ENCODE measurements at regions of chr17 and their contacts with region 1.

Region 1: DNA sequence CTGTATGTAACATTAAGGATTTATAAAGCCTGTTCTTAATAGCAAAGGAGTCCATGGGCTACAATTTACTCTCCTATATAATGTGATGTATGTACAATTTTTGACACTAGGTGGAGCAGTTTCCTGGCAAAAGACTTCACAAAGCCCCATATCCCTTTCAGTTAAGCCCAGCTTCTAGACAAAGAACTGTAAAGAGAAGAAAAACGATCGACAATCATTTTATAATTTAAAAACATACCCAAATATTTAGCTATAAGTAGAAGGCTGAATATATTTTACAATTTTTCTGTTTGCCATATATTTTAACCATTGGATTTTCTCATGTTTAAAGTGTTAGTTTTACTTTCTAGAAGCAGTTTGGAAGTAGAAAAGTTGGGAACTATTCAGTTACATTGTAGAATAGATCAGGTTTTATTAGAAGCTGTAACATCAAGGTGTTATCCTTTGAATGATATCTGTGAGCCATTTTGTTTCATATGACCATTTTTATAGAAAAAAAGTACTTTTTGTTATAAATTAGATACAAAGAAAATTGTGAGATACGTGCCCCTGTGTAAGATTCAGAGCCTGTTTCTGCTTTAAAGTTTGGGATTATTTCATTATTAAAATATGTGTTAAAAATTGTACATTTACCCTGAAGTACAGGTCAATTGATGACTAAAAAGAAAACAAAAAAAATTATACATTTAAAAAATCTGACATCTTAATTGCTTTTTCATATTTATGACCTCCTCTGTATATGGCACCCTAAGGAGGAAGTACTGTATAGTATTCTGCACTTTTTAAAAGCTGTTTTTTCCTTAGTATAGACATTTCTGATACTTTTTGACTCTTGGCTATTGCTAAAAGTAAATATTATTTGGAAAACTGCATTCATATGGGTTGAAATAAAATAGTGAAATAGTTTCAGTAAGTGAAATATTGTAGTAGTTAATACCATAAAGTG is 46.3 kb downstream of the VMP1 start:
- DNase-seq: peak; percentile 57 to 88 (median 68)
- ATAC-seq: peak; percentile 95
- H3K4me3 ChIP-seq: no peak overlapping the region
- H3K27ac ChIP-seq: peak overlapping the region; percentile 63; the same call in 2 of the 3 replicates
- H3K4me1 ChIP-seq: peaks cover 0 to 5% of the 10 kb centered on the region in 2 experiments; a peak in 2 of 5 replicates
- H3K27me3 ChIP-seq: no peaks in the 10 kb centered on the region
- CTCF ChIP-seq: peak; percentile 57 to 89 (median 65); a peak in 5 of 6 replicates
- EP300 ChIP-seq: 0 out of 2 replicates have a peak, but pooled peaks have one; percentile 23
- POLR2A ChIP-seq: no peak
- RAD21 ChIP-seq: peak; percentile 93 to 97

Region 2: DNA sequence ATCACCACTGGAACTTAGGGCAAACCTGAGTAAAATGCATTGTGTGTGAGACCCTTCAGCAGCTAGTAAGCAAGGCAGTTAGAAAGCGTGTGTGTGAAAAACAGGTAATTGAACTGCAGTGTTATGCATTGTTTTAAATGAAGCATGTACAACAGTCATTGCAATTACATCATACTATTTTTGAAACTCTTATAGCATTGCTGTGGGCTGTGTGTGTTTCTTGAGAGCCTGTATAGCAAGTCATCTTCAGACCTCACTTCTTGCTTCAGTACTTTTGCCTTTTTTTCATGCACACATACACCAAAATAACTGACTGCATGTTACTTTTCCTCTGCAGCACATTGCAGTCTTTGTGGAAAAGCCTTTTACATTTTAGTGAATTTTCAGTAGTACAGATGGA is 65.8 kb before region 1 on chr17:
- CTCF ChIA-PET with region 1: no interaction called
- POLR2A ChIA-PET with region 1: no interaction called
- in situ Hi-C with region 1: no loop called
- intact Hi-C with region 1: no loop called
- DNase-seq: no peak
- ATAC-seq: no peak
- H3K4me3 ChIP-seq: no peak overlapping the region
- H3K27ac ChIP-seq: peak overlapping the region; percentile 29; the same call in 1 of the 3 replicates
- H3K4me1 ChIP-seq: peaks cover 7 to 28% of the 10 kb centered on the region in 2 experiments; a peak in 4 of 5 replicates
- H3K27me3 ChIP-seq: no peaks in the 10 kb centered on the region
- CTCF ChIP-seq: no peak
- EP300 ChIP-seq: no peak
- POLR2A ChIP-seq: 0 out of 2 replicates have a peak, but pooled peaks have one; percentile 26
- RAD21 ChIP-seq: no peak

Region 3: GRCh38 chr17:59786536-59787319 is 32.9 kb after region 1 on chr17:
- CTCF ChIA-PET with region 1: no interaction called
- POLR2A ChIA-PET with region 1: interaction called, 5 read pairs
- in situ Hi-C with region 1: no loop called
- intact Hi-C with region 1: loop called (anchors 2 kb)
- DNase-seq: peak; percentile 70 to 96 (median 78)
- ATAC-seq: peak; percentile 89
- H3K4me3 ChIP-seq: peak overlapping the region; percentile 20; the same call in 1 of the 2 replicates
- H3K27ac ChIP-seq: peak overlapping the region; percentile 92
- H3K4me1 ChIP-seq: peaks cover 35 to 45% of the 10 kb centered on the region in 2 experiments
- H3K27me3 ChIP-seq: no peaks in the 10 kb centered on the region
- CTCF ChIP-seq: peak in 1 of 3 experiments; percentile 29; a peak in 2 of 6 replicates
- EP300 ChIP-seq: peak; percentile 89
- POLR2A ChIP-seq: peak; percentile 72
- RAD21 ChIP-seq: peak; percentile 12 to 43; a peak in 2 of 4 replicates

Region 4: GRCh38 chr17:59837308-59838051 is 83.7 kb after region 1 on chr17:
- CTCF ChIA-PET with region 1: interaction called, 18 read pairs
- POLR2A ChIA-PET with region 1: interaction called, 87 read pairs
- in situ Hi-C with region 1: no loop called
- intact Hi-C with region 1: no loop called
- DNase-seq: peak; percentile 72 to 97 (median 79)
- ATAC-seq: peak; percentile 80
- H3K4me3 ChIP-seq: peak overlapping the region; percentile 96
- H3K27ac ChIP-seq: peak overlapping the region; percentile 99
- H3K4me1 ChIP-seq: peaks cover 2 to 29% of the 10 kb centered on the region in 2 experiments; a peak in 3 of 5 replicates
- H3K27me3 ChIP-seq: no peaks in the 10 kb centered on the region
- CTCF ChIP-seq: 0 out of 6 replicates have a peak, but pooled peaks of 1 of the 3 experiments have one; percentile 0
- EP300 ChIP-seq: peak; percentile 92
- POLR2A ChIP-seq: peak; percentile 99
- RAD21 ChIP-seq: no peak

Region 5: DNA sequence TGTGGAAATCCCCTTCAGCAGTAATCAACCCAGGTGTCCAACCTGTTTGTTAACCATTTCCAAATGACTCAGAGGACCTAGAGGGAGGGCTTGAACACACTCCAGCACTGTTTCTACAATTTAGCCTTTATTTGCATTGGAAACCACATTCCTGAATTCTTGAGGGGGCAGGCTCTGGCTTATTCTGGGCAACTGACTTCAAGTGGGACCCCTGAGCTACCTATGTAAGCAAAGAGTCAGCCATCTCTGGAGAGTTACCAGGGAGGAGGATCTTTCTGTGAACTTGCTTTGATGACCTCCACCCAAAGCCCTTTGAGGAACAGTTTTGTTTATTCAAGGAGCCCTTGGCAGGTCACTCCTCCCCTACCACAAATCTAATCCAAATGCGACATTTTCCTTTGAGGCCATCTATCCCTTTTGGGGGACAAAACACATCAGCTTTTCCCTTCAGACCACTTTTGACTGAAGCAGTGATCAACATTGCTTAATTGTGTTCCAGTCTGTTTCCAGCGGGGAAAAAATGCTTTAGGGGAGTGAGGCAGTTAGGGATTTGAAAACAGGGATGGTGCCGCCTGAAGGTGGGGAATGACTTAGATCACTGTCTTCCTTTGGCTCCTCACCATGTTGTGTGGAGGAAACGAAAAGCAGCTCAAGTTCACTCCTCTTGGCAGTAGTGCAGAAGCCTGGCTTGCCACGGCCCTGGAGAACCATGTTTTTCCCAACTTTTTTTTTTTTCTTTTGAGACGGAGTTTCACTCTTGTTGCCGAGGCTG is 92.8 kb after region 1 on chr17:
- CTCF ChIA-PET with region 1: interaction called, 3 read pairs
- POLR2A ChIA-PET with region 1: interaction called, 87 read pairs
- in situ Hi-C with region 1: loop called (anchors 5 kb)
- intact Hi-C with region 1: loop called (anchors 1 kb)
- DNase-seq: peak in 1 of 4 experiments; percentile 21
- ATAC-seq: no peak
- H3K4me3 ChIP-seq: no peak overlapping the region
- H3K27ac ChIP-seq: peak overlapping the region; percentile 20; the same call in 1 of the 3 replicates
- H3K4me1 ChIP-seq: peaks cover 20 to 42% of the 10 kb centered on the region in 2 experiments
- H3K27me3 ChIP-seq: no peaks in the 10 kb centered on the region
- CTCF ChIP-seq: no peak
- EP300 ChIP-seq: no peak
- POLR2A ChIP-seq: no peak; the same call in 1 of the 2 replicates
- RAD21 ChIP-seq: no peak

Region 6: GRCh38 chr17:59859444-59860025 is 105.7 kb after region 1 on chr17:
- CTCF ChIA-PET with region 1: interaction called, 54 read pairs
- POLR2A ChIA-PET with region 1: interaction called, 5 read pairs
- in situ Hi-C with region 1: no loop called
- intact Hi-C with region 1: loop called (anchors 1 kb)
- DNase-seq: peak in 1 of 4 experiments; percentile 30
- ATAC-seq: peak; percentile 82
- H3K4me3 ChIP-seq: no peak overlapping the region
- H3K27ac ChIP-seq: no peak overlapping the region
- H3K4me1 ChIP-seq: 0 out of 5 replicates have a peak, but pooled peaks cover 0 to 2% of the 10 kb centered on the region in 2 experiments
- H3K27me3 ChIP-seq: no peaks in the 10 kb centered on the region
- CTCF ChIP-seq: peak; percentile 43 to 75 (median 51); a peak in 4 of 6 replicates
- EP300 ChIP-seq: no peak
- POLR2A ChIP-seq: no peak
- RAD21 ChIP-seq: peak; percentile 77 to 86

Region 7: DNA sequence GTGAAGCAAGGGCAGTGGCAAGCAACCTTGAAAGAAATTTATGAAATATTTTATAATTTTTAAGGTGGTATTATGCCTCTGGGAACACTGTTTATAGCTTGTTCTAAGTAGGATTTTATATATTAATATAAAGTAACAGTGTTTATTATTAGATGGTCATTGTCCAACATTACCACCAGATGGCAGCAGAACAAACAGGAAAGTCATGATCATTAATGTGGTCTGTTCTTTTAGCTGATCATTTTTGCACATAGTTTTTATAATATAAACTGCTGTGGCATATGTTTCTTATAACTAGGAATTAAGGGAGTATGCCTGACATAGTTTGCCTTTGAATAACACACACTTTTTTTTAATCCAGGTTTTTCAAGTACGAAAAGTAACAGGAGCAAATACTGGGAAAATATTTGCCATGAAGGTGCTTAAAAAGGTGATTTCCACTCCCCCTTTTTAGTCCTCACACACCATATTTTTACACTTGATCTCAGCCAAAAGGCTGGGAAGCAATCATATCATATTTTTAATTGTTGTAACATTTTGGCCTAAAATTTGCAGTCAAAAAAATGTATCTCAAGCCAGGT is 160.6 kb after region 1 on chr17:
- CTCF ChIA-PET with region 1: no interaction called
- POLR2A ChIA-PET with region 1: no interaction called
- in situ Hi-C with region 1: no loop called
- intact Hi-C with region 1: loop called (anchors 1 kb)
- DNase-seq: peak; percentile 47 to 55 (median 50)
- ATAC-seq: peak; percentile 70
- H3K4me3 ChIP-seq: no peak overlapping the region
- H3K27ac ChIP-seq: no peak overlapping the region
- H3K4me1 ChIP-seq: no peaks in the 10 kb centered on the region
- H3K27me3 ChIP-seq: no peaks in the 10 kb centered on the region
- CTCF ChIP-seq: peak in 2 of 3 experiments; percentile 43 to 73; a peak in 4 of 6 replicates
- EP300 ChIP-seq: no peak
- POLR2A ChIP-seq: no peak
- RAD21 ChIP-seq: peak; percentile 62 to 70

Measured in K562 (cell line).